ENCODE measurements at regions of chr7 and their contacts with region 1.

Region 1: DNA sequence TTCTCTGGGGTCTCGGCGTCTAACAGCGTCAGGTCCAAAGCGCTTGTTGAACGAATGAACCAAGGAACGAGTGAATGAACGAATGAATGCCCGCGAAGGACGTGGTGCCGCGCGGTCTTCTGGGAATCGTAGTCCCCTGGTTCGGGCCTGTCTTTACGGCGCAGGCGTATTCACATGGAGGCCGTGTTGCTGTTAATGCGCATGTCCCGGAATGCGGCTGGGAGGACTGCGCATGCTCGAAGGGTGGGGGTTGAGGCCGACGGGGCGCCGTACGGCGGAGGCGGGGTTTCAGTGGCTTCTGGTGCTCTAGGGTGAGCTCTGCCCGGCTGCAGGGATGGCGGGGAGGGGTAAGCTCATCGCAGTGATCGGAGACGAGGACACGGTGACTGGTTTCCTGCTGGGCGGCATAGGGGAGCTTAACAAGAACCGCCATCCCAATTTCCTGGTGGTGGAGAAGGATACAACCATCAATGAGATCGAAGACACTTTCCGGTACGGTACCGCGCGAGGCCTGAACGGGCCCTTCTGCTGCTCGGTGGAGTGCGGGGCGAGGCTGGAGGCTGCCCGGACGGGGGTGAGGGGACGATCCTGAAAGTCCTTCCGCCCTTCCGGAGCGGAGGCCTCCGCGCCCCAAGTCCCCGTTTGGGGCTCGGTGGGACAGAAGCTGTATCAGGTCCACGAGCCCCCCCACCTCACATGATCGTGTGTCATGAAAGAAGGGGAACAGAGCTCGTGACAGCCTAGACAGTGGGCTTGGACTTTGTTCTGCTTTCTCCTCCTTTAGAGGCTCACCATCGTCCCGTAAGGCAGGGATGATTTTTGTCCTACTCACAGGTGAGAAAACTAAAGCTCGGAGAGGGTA is at the start of gene ATP6V1F:
- DNase-seq: peak; percentile 93
- H3K4me3 ChIP-seq: peak within 1 kb of the TSS; percentile 80
- H3K27me3 ChIP-seq: no peaks in the 10 kb centered on the region
- CTCF ChIP-seq: peak; percentile 12; the same call in 1 of the 2 replicates
- polyA plus RNA-seq, gene ATP6V1F: 192 and 198 TPM in 2 replicates

Region 2: GRCh38 chr7:128830231-128831177 is 32.3 kb before region 1 on chr7 and contains the start of gene FLNC:
- CTCF ChIA-PET with region 1: interaction called, 5 read pairs
- POLR2A ChIA-PET with region 1: interaction called, 16 read pairs
- DNase-seq: no peak
- H3K4me3 ChIP-seq: peak within 1 kb of the TSS; percentile 97
- H3K27me3 ChIP-seq: no peaks in the 10 kb centered on the region
- CTCF ChIP-seq: no peak
- polyA plus RNA-seq, gene FLNC: 24.6 and 58.6 TPM in 2 replicates

Region 3: GRCh38 chr7:128841921-128842651 is 20.7 kb before region 1 on chr7:
- CTCF ChIA-PET with region 1: interaction called, 15 read pairs
- POLR2A ChIA-PET with region 1: no interaction called
- DNase-seq: no peak
- H3K4me3 ChIP-seq: no peak overlapping the region
- H3K27me3 ChIP-seq: no peaks in the 10 kb centered on the region
- CTCF ChIP-seq: peak; percentile 86

Region 4: DNA sequence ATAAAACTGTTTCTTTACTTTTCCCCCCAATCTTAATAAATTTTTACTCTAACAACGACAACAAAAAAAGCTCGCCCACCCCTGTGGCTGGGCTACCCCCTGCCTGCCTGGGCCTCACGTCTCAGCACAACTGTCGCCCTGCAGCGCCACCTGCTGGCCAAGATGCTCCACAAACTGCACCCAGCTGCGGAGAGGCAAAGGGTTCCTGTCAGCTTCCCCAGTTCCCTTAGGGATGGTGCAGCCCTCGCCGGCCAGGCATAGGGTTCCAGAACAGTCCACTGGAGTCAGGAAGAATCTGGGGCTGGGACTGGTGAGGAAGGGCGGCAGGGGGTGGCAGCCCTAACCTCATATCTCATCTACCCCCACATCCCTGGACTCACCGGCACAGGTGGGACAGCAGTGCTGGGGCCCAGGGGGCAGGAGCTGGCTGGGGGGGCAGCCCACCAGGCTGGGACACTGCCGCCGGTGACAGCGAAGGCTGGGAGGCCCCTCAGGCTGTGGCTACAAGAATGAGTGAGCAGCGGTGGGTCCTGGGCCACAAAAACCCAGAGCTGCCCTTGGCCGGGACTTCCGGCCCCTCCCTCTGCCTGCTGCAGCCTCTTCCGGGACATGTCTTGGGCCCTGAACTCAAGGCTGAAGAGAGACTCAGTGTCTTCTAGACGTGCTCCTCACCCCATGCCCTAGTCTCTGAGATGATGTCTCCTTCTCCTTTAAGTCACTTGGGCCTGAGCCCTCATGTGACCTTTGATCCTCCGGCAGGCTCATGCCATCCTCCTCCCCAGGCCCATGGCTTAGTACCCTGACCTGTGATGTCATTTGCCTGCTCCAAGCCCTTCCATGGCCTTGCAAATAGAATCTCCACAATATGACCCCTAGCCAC is 21.1 kb after region 1 on chr7:
- CTCF ChIA-PET with region 1: interaction called, 54 read pairs
- POLR2A ChIA-PET with region 1: no interaction called
- DNase-seq: no peak
- H3K4me3 ChIP-seq: no peak overlapping the region
- H3K27me3 ChIP-seq: 0 out of 2 replicates have a peak, but pooled peaks cover 2% of the 10 kb centered on the region
- CTCF ChIP-seq: peak; percentile 90

Region 5: GRCh38 chr7:128954830-128955802 is 92.3 kb after region 1 on chr7:
- CTCF ChIA-PET with region 1: no interaction called
- POLR2A ChIA-PET with region 1: no interaction called
- DNase-seq: peak; percentile 26
- H3K4me3 ChIP-seq: no peak overlapping the region
- H3K27me3 ChIP-seq: no peaks in the 10 kb centered on the region
- CTCF ChIP-seq: no peak

Measured in BJ (cell line).